ENCODE measurements at regions of chr7 and their contacts with region 1.

Region 1: DNA sequence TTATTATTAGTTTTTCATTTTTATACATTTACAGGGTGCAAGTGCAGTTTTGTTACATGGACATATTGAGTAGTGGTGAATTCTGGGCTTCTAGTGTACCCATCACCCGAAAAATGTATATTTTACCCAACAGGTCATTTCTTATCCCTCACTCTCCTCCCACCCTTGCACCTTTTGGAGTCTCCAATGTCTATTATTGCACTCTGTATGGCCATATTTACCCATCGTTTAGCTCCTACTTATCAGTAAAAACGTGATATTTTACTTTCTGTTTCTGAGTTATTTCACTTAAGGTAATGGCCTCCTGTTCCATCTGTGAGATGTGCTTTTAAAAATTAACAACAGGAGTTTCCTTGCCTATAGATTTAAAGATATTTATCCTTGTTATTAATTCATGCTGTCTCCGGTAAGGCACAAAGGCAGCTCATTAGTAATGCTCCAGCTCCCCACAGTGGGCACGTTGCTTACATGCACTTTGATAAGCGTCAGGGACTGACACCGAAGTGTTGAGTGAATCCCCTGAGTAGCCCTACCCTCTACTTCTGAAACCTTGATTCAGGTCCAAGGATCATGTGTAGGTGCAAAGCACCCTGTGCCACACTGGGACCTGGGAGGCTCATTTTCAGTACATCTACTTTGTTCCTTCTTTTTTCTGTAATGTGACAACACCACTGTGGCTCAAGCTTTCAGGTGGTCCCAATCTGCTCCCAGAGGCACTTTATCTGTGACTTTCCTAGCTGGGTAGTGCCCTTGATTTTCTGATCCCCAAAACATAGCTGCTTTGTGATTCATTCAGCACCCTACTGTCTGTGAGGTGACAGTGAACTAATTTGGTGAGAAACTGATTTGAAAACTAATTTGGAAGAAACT is 27.3 kb downstream of the HYAL4 start:
- DNase-seq: peak; percentile 52
- H3K4me3 Mint-ChIP-seq: no peak overlapping the region
- H3K27ac Mint-ChIP-seq: no peak overlapping the region
- H3K4me1 Mint-ChIP-seq: no peaks in the 10 kb centered on the region
- H3K27me3 Mint-ChIP-seq: peaks cover 2% of the 10 kb centered on the region

Region 2: GRCh38 chr7:123494193-123494796 is 377.9 kb before region 1 on chr7:
- CTCF ChIA-PET with region 1: interaction called, 19 read pairs
- POLR2A ChIA-PET with region 1: no interaction called
- intact Hi-C with region 1: loop called (anchors 2 kb)
- DNase-seq: peak; percentile 14
- H3K4me3 Mint-ChIP-seq: no peak overlapping the region
- H3K27ac Mint-ChIP-seq: no peak overlapping the region
- H3K4me1 Mint-ChIP-seq: no peaks in the 10 kb centered on the region
- H3K27me3 Mint-ChIP-seq: peaks cover 11% of the 10 kb centered on the region

Region 3: DNA sequence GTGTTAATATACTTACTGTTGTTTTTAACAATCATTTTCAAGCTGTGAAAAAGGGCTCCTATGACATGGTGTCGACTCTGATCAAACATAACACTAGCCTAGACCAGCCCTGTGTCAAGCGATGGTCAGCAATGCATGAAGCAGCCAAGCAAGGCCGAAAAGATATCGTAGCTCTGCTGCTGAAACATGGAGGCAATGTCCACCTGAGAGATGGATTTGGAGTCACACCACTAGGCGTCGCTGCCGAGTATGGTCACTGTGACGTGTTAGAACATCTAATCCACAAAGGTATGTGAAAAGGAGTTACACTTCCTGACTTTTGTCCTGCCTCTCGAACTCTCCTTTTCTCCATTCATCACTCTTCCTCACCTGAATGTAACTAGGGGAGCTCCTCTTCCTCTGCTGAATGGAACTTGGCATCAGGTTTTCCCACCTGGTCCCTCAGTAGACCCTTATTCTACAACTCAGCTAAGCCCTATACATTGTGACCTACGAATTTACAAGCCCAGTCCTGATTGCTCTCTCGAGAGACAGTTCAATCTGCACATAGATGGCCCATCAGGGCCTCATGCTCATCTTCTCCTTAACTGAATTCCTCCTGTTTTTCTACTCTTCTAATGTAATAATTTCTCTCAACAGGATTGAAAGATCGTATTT is 247.6 kb before region 1 on chr7:
- CTCF ChIA-PET with region 1: interaction called, 15 read pairs
- POLR2A ChIA-PET with region 1: no interaction called
- intact Hi-C with region 1: no loop called
- DNase-seq: peak; percentile 80
- H3K4me3 Mint-ChIP-seq: no peak overlapping the region
- H3K27ac Mint-ChIP-seq: no peak overlapping the region
- H3K4me1 Mint-ChIP-seq: no peaks in the 10 kb centered on the region
- H3K27me3 Mint-ChIP-seq: no peaks in the 10 kb centered on the region

Region 4: GRCh38 chr7:123682690-123683089 is 189.5 kb before region 1 on chr7:
- CTCF ChIA-PET with region 1: interaction called, 8 read pairs
- POLR2A ChIA-PET with region 1: no interaction called
- intact Hi-C with region 1: loop called (anchors 2 kb)
- DNase-seq: no peak
- H3K4me3 Mint-ChIP-seq: no peak overlapping the region
- H3K27ac Mint-ChIP-seq: no peak overlapping the region
- H3K4me1 Mint-ChIP-seq: no peaks in the 10 kb centered on the region
- H3K27me3 Mint-ChIP-seq: no peaks in the 10 kb centered on the region

Region 5: DNA sequence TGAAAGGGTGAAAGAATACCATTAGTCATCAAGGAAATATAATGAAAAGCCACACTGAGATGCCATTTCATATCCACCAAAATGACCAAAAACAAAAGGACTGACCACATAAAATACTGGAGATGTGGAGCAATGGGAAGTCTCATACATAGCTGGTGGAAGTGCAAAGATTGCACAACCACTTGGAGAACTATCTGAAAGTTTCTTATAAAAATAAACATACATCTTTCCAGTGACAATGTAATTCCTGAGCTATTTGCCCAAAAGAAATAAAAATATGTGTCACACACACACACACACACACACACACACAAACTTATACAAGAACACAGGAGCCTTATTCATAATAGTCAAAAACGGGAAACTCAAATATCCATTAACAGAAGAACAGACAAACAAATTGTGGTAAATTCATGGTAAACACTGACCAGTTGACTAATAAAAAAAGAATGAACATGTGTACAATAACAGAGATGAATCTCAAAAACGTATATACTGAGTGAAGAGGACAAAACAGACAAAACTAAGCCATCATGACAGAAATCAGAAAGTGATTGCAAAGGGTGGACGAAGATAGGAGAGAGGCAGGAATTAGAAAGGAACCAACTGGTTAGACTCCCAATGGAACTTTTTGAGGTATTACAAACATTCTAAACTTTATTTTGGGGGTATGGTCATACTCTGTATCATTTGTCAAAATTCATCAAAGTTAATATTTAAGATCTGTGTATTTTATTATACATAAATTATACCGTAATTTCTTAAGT is 145.0 kb before region 1 on chr7:
- CTCF ChIA-PET with region 1: no interaction called
- POLR2A ChIA-PET with region 1: no interaction called
- intact Hi-C with region 1: no loop called
- DNase-seq: no peak
- H3K4me3 Mint-ChIP-seq: no peak overlapping the region
- H3K27ac Mint-ChIP-seq: no peak overlapping the region
- H3K4me1 Mint-ChIP-seq: peaks cover 41% of the 10 kb centered on the region
- H3K27me3 Mint-ChIP-seq: no peaks in the 10 kb centered on the region

Region 6: GRCh38 chr7:123797673-123798527 is 74.3 kb before region 1 on chr7:
- CTCF ChIA-PET with region 1: interaction called, 97 read pairs
- POLR2A ChIA-PET with region 1: no interaction called
- intact Hi-C with region 1: loop called (anchors 2 kb)
- DNase-seq: no peak
- H3K4me3 Mint-ChIP-seq: no peak overlapping the region
- H3K27ac Mint-ChIP-seq: no peak overlapping the region
- H3K4me1 Mint-ChIP-seq: no peaks in the 10 kb centered on the region
- H3K27me3 Mint-ChIP-seq: peaks cover 2% of the 10 kb centered on the region

Region 7: GRCh38 chr7:124191713-124192112 is 319.5 kb after region 1 on chr7:
- CTCF ChIA-PET with region 1: no interaction called
- POLR2A ChIA-PET with region 1: no interaction called
- intact Hi-C with region 1: no loop called
- DNase-seq: no peak
- H3K4me3 Mint-ChIP-seq: no peak overlapping the region
- H3K27ac Mint-ChIP-seq: no peak overlapping the region
- H3K4me1 Mint-ChIP-seq: no peaks in the 10 kb centered on the region
- H3K27me3 Mint-ChIP-seq: no peaks in the 10 kb centered on the region

Measured in activated CD4-positive, alpha-beta memory T cell treated with anti-CD3 and anti-CD28 coated beads for 36 hours (primary cell).